H1 (cell line): ENCODE measurements at regions of chr6 and their contacts with region 1.

Region 1: DNA sequence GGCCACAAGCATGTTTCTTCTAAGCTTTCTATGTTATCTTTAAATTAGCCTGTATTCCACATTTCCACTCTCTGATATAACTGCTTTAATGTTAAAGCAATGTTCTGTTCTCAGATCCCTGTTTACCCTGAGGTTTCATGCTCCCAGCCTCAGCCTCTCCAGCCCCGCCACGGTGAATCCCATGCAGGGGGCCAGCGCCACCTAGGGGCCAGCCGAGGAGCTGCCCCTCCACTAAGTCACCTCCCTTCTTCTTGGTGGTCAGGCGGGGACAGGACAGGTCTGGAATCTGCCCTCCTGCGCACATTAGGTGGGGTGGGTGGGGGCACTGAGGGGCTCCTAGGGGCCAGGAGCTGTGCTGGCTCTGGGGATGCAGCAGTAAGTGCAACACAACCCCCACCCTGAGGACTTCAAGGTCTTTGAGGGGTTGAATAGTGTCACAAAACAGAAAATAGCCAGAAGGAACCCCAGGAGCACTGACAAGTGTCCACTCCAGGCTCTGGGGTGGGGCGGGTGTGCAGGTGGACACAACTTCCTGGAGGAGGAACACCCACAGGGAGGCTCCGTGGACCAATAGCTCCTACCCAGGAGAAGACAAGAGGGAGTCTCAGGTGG is 61.6 kb downstream of the RAB44 start:
- DNase-seq: peak; percentile 23 to 94
- H3K4me3 ChIP-seq: no peak overlapping the region
- H3K27ac ChIP-seq: no peak overlapping the region
- H3K4me1 ChIP-seq: peaks cover 0 to 8% (median 2%) of the 10 kb centered on the region in 4 experiments; a peak in 3 of 7 replicates
- H3K27me3 ChIP-seq: no peaks in the 10 kb centered on the region
- CTCF ChIP-seq: peak; percentile 92 to 99 (median 94)
- EP300 ChIP-seq: no peak
- POLR2A ChIP-seq: no peak
- RAD21 ChIP-seq: peak; percentile 88 to 92

Region 2: DNA sequence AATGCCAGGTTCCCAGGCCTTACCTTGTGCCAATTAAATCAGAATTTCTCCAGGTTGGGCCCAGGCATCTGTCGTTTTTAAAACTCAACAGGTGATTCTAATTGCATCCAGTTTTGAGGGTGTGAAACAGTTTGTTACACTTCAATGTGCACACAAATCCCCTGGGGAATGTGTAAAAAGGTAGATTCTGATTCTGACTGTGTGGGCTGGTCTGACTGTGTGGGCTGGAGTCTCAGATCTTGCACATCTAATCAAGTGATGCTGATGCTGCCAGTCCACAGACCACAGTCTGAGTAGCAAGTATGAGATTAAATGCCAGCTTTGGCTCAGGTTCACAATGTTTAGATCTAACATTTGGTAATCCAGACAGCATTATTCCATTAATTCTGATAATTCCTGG is 359.3 kb before region 1 on chr6:
- CTCF ChIA-PET with region 1: no interaction called
- POLR2A ChIA-PET with region 1: no interaction called
- DNase-seq: no peak
- H3K4me3 ChIP-seq: no peak overlapping the region
- H3K27ac ChIP-seq: no peak overlapping the region
- H3K4me1 ChIP-seq: no peaks in the 10 kb centered on the region
- H3K27me3 ChIP-seq: no peaks in the 10 kb centered on the region
- CTCF ChIP-seq: no peak
- EP300 ChIP-seq: no peak
- POLR2A ChIP-seq: no peak
- RAD21 ChIP-seq: no peak

Region 3: GRCh38 chr6:36615018-36615761 is 144.1 kb before region 1 on chr6:
- CTCF ChIA-PET with region 1: interaction called, 48 read pairs
- POLR2A ChIA-PET with region 1: no interaction called
- DNase-seq: no peak
- H3K4me3 ChIP-seq: no peak overlapping the region
- H3K27ac ChIP-seq: no peak overlapping the region
- H3K4me1 ChIP-seq: peaks cover 0 to 2% (median 0%) of the 10 kb centered on the region in 4 experiments; a peak in 1 of 7 replicates
- H3K27me3 ChIP-seq: no peaks in the 10 kb centered on the region
- CTCF ChIP-seq: peak; percentile 47 to 77 (median 75)
- EP300 ChIP-seq: no peak
- POLR2A ChIP-seq: no peak
- RAD21 ChIP-seq: peak; percentile 85 to 86

Region 4: GRCh38 chr6:36638579-36638978 is 120.7 kb before region 1 on chr6:
- CTCF ChIA-PET with region 1: no interaction called
- POLR2A ChIA-PET with region 1: no interaction called
- DNase-seq: no peak
- H3K4me3 ChIP-seq: no peak overlapping the region
- H3K27ac ChIP-seq: no peak overlapping the region
- H3K4me1 ChIP-seq: peaks cover 0 to 4% (median 1%) of the 10 kb centered on the region in 4 experiments; a peak in 2 of 7 replicates
- H3K27me3 ChIP-seq: no peaks in the 10 kb centered on the region
- CTCF ChIP-seq: no peak
- EP300 ChIP-seq: no peak
- POLR2A ChIP-seq: no peak
- RAD21 ChIP-seq: no peak

Region 5: DNA sequence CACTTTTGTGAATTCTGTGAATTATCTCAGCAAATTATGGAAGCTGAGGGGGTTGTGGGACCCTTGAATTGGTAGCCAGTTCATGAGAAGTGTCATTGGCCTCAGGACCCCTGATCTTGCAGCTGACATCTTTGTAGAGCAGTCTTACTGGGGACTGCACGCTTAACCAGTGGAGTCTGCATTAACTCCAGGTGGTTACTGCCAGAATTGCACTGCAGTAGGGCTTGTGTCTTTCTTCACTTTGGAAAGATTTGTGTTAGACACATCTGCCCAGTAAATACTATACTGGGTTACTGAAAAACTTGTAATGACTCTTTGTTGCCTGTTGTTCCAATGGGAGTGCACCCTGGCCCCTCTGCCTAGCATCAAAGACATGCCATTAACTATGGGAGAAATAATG is 102.0 kb before region 1 on chr6:
- CTCF ChIA-PET with region 1: interaction called, 11 read pairs
- POLR2A ChIA-PET with region 1: no interaction called
- DNase-seq: no peak
- H3K4me3 ChIP-seq: no peak overlapping the region
- H3K27ac ChIP-seq: no peak overlapping the region
- H3K4me1 ChIP-seq: peaks cover 5 to 8% (median 6%) of the 10 kb centered on the region in 4 experiments
- H3K27me3 ChIP-seq: peaks cover 0 to 4% (median 0%) of the 10 kb centered on the region in 4 experiments; a peak in 2 of 7 replicates
- CTCF ChIP-seq: no peak
- EP300 ChIP-seq: no peak
- POLR2A ChIP-seq: no peak
- RAD21 ChIP-seq: no peak

Region 6: DNA sequence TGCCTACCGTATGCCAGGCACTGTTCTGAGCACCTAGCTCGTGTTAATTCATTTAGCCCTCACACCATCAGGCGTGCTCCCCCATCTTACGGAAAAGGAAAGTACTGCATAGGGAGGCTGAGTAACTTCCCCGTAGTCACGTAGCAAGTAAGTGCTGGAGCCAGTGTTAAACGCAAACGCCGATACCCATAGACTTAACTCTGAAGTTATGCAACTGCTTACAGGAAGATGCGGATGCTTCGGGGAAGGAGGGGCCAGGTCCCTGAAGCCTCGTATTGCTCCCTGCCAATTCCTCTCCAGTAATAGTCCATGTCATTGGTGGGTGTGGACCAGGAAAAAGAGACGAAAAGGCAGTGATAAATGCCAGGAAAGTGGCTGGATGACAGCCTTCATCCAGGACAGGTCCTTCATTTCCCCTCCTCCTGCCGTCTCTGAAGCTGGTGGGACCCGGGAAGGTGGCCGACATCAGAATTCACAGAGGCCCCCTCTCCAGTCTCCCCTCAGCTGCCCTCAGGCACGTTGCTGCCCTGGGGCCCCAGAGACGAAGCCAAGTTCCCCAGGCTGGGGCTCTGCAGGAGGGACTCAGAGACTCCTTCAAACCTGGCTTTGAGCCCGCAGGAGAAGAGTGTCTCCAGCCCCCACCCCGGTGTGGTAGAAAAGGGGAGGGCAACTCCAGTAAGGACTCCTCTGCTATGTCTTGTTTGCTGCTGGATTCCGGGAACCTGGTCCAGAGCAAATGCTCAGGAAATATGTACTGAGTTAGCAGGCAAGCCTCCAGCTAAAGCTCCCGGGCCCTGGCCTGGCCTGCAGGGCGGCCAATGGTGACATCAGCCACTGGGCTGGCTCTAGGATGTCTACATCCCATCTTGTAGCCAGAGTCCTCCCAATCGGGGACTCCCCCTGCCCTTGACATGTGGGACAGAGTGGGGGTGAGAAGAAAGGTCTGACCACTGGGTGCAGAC is 23.9 kb before region 1 on chr6:
- CTCF ChIA-PET with region 1: interaction called, 20 read pairs
- POLR2A ChIA-PET with region 1: interaction called, 3 read pairs
- DNase-seq: no peak
- H3K4me3 ChIP-seq: no peak overlapping the region
- H3K27ac ChIP-seq: no peak overlapping the region
- H3K4me1 ChIP-seq: peaks cover 2 to 11% (median 6%) of the 10 kb centered on the region in 4 experiments; a peak in 5 of 7 replicates
- H3K27me3 ChIP-seq: no peaks in the 10 kb centered on the region; a peak in 1 of 7 replicates
- CTCF ChIP-seq: no peak
- EP300 ChIP-seq: no peak
- POLR2A ChIP-seq: no peak
- RAD21 ChIP-seq: no peak

Region 7: GRCh38 chr6:36780442-36781177 is 21.4 kb after region 1 on chr6:
- CTCF ChIA-PET with region 1: interaction called, 231 read pairs
- POLR2A ChIA-PET with region 1: interaction called, 4 read pairs
- DNase-seq: no peak
- H3K4me3 ChIP-seq: no peak overlapping the region
- H3K27ac ChIP-seq: no peak overlapping the region
- H3K4me1 ChIP-seq: peaks cover 4 to 18% (median 14%) of the 10 kb centered on the region in 4 experiments
- H3K27me3 ChIP-seq: peaks cover 0 to 4% (median 0%) of the 10 kb centered on the region in 4 experiments; a peak in 3 of 7 replicates
- CTCF ChIP-seq: no peak
- EP300 ChIP-seq: no peak
- POLR2A ChIP-seq: no peak
- RAD21 ChIP-seq: no peak

Region 8: GRCh38 chr6:36874443-36875249 is 115.4 kb after region 1 on chr6 and contains the start of gene PPIL1:
- CTCF ChIA-PET with region 1: interaction called, 39 read pairs
- POLR2A ChIA-PET with region 1: interaction called, 3 read pairs
- DNase-seq: peak in 1 of 2 experiments; percentile 82
- H3K4me3 ChIP-seq: peak within 1 kb of the TSS; percentile 83 to 91 (median 87)
- H3K27ac ChIP-seq: peak within 1 kb of the TSS; percentile 93
- H3K4me1 ChIP-seq: peaks cover 0 to 4% (median 1%) of the 10 kb centered on the region in 4 experiments; a peak in 3 of 7 replicates
- H3K27me3 ChIP-seq: no peaks in the 10 kb centered on the region
- CTCF ChIP-seq: no peak
- EP300 ChIP-seq: no peak
- POLR2A ChIP-seq: peak; percentile 77 to 81; a peak in 2 of 3 replicates
- RAD21 ChIP-seq: no peak
- total RNA-seq, gene PPIL1: 85.8 and 86.5 TPM in 2 replicates